AG04450 (cell line): ENCODE measurements at regions of chr15 and their contacts with region 1.

Region 1: DNA sequence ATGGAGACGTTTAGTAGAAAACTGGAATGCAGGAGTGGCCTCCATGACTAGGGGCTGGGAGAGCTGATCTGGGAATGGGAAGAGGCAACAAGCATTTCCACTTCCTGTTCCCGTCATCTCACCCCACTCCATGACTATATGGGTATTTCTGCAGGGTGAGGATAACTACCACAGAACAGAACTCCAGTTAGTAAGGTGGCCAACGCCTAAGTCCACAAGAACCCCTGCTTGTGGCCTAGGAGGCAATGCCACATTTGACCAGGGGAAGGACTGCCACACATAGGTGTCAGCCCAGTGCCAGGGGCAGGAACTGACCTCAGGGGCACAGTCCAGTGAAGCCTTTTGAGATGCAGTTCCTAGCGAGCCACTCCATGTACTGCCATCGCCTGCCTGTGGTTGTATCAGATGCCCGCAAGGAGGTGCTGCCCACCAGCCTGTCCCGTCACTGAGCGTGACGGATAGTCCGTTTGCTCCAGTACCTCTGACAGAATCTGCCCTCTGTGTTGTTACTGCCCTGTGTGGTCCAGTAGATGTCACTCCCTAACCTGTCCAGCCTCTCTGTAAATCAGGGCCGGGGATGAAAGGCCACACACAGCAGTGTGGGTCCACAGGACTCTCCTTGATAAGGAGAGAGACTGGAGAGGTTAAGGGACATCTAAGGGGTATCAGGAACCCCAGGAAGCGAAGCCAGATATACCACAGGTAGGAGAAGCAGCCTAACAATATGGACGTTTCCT is 3.5 kb upstream of the MTFMT start:
- DNase-seq: no peak
- H3K4me3 ChIP-seq: no peak overlapping the region
- H3K27ac ChIP-seq: no peak overlapping the region
- H3K27me3 ChIP-seq: no peaks in the 10 kb centered on the region
- CTCF ChIP-seq: peak; percentile 71

Region 2: DNA sequence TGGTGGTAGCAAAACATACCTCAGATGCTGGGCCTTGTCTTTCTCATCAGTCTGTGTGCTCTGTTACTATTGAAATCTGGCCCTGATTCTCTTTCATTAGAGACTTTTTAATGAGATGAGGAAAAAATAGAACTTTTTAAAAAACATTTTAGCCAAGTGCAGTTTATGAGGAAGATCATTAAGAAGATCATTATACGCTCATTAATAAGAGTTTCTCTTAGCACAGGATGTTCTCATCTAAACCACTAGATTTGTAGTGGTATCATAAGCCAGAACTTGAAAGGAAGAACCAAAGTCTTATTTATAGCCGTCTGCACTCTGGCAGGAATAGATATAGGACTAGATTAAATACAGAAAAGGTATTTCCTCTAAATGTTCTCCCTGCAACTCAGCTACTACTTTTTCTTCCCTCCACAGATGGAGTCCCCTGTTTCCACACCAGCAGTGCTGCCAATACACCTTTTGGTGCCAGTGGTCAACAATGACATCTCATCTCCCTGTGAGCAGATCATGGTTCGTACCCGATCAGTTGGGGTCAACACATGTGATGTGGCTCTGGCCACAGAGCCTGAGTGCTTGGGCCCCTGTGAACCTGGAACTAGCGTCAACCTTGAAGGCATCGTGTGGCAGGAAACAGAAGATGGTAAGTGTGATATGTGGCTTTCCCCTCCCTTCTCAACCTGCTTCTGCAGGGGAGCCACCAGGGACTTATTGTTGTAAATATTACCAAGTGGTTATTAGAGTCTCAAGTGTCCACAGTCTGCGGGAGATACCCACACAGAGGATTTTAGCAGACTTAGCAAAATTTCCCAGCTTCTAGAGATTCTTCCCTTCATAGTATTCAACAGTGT is 410.3 kb before region 1 on chr15:
- CTCF ChIA-PET with region 1: no interaction called
- POLR2A ChIA-PET with region 1: no interaction called
- DNase-seq: no peak
- H3K4me3 ChIP-seq: no peak overlapping the region
- H3K27ac ChIP-seq: no peak overlapping the region
- H3K27me3 ChIP-seq: no peaks in the 10 kb centered on the region
- CTCF ChIP-seq: no peak

Region 3: DNA sequence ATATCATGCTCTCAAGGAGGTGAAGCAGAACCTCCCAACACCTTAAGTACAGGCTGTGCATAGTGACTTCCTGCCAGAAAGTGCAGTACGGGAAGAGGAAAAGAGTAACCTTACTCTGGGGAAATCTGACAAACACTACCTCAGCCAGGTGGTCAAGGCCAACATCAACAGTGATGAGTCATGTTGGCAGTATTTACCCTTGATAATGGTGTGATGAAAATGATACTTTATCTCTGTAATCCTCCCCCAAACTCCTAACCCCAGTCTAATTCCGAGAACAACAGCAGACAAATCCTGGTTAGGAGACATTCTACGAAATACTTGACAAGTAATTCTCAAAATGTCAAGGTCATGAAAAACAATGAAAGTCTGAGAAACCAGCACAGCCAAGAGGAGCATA is 94.8 kb before region 1 on chr15:
- CTCF ChIA-PET with region 1: no interaction called
- POLR2A ChIA-PET with region 1: no interaction called
- DNase-seq: no peak
- H3K4me3 ChIP-seq: no peak overlapping the region
- H3K27ac ChIP-seq: no peak overlapping the region
- H3K27me3 ChIP-seq: no peaks in the 10 kb centered on the region
- CTCF ChIP-seq: no peak

Region 4: GRCh38 chr15:65054333-65055200 is 21.6 kb after region 1 on chr15:
- CTCF ChIA-PET with region 1: interaction called, 36 read pairs
- POLR2A ChIA-PET with region 1: interaction called, 3 read pairs
- DNase-seq: no peak
- H3K4me3 ChIP-seq: no peak overlapping the region
- H3K27ac ChIP-seq: no peak overlapping the region
- H3K27me3 ChIP-seq: peaks cover under 1% of the 10 kb centered on the region
- CTCF ChIP-seq: peak; percentile 99

Region 5: DNA sequence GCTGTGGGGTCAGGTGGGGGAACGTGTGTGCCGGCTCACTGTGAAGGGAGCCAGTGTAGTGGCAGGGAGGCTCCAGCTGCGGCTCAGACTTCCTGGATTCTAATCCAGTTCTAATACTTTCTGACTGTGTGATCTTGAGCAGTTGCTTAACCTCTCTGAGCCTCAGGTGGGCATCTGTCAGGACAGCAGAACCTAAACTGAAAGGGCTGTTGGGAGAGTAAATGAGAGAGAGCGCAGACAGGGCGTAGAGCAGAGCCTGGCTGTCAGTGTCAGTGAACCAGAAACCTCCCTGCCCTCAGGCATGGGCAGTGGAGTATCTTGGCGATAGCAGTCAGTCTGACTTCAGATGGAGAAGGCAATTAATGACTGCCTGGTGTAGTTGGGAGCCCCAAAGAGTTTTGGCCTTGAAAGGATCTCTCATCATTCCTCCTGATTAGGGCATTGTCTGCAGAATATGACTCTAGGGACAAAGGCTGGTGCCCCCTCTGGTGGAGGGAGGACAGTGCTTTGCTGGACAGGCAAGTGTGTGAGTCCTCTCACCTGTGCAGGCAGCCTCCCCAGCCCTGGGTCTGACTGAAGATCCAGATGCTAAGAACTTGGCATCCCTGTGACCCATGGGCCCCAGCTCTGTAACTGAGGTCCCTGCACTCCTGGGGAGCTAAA is 53.2 kb after region 1 on chr15:
- CTCF ChIA-PET with region 1: interaction called, 45 read pairs
- POLR2A ChIA-PET with region 1: interaction called, 4 read pairs
- DNase-seq: no peak
- H3K4me3 ChIP-seq: no peak overlapping the region
- H3K27ac ChIP-seq: no peak overlapping the region
- H3K27me3 ChIP-seq: peaks cover 18% of the 10 kb centered on the region
- CTCF ChIP-seq: peak; percentile 55

Region 6: GRCh38 chr15:65101411-65101890 is 68.5 kb after region 1 on chr15:
- CTCF ChIA-PET with region 1: interaction called, 78 read pairs
- POLR2A ChIA-PET with region 1: interaction called, 5 read pairs
- DNase-seq: peak; percentile 36
- H3K4me3 ChIP-seq: no peak overlapping the region
- H3K27ac ChIP-seq: no peak overlapping the region
- H3K27me3 ChIP-seq: no peaks in the 10 kb centered on the region
- CTCF ChIP-seq: peak; percentile 93